WTC11 (cell line): ENCODE measurements at regions of chr9 and their contacts with region 1.

Region 1: DNA sequence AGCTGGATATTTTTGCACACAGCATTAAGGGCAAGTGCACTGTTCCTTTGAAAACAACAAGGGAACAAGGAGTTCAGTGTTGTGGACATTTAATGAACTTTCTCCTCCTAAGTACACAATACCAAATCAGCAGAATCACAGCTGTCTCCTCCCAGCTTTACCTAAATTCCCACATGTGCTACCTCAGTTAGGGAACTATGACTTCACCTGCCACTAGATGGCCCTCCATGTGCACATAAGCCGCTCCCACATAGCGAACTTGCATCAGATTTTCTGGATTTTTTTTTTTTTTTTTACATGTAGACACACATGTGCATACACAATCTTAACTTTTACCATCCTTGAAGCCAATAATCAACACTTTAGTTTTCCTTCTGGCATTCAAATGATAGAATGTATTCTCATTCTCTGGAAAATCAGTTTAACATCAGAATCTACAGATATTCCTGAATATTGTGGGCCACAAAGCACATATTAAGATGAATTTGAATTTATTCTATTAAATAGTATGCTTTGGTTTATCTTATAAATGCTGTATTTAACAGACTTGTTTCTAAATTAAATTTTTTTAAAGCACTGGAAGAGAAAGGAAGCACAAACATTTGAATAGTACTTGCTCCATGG is 123.6 kb downstream of the PALM2AKAP2 start:
- DNase-seq: peak; percentile 59
- ATAC-seq: peak; percentile 87
- H3K4me3 Mint-ChIP-seq: no peak overlapping the region
- H3K27ac Mint-ChIP-seq: no peak overlapping the region
- H3K4me1 Mint-ChIP-seq: peaks cover 12% of the 10 kb centered on the region
- H3K27me3 Mint-ChIP-seq: no peaks in the 10 kb centered on the region
- CTCF ChIP-seq: peak; percentile 62

Region 2: GRCh38 chr9:109590945-109591344 is 312.7 kb before region 1 on chr9:
- CTCF ChIA-PET with region 1: no interaction called
- POLR2A ChIA-PET with region 1: no interaction called
- DNase-seq: no peak
- ATAC-seq: no peak
- H3K4me3 Mint-ChIP-seq: no peak overlapping the region
- H3K27ac Mint-ChIP-seq: no peak overlapping the region
- H3K4me1 Mint-ChIP-seq: peaks cover 3% of the 10 kb centered on the region; the same call in 1 of the 2 replicates
- H3K27me3 Mint-ChIP-seq: 0 out of 2 replicates have a peak, but pooled peaks cover 2% of the 10 kb centered on the region
- CTCF ChIP-seq: no peak

Region 3: GRCh38 chr9:109969011-109969410 is 65.4 kb after region 1 on chr9:
- CTCF ChIA-PET with region 1: interaction called, 11 read pairs
- POLR2A ChIA-PET with region 1: no interaction called
- DNase-seq: peak; percentile 38
- ATAC-seq: peak; percentile 95
- H3K4me3 Mint-ChIP-seq: no peak overlapping the region
- H3K27ac Mint-ChIP-seq: no peak overlapping the region; the same call in none of the 2 replicates
- H3K4me1 Mint-ChIP-seq: peaks cover 7% of the 10 kb centered on the region
- H3K27me3 Mint-ChIP-seq: no peaks in the 10 kb centered on the region
- CTCF ChIP-seq: no peak

Region 4: DNA sequence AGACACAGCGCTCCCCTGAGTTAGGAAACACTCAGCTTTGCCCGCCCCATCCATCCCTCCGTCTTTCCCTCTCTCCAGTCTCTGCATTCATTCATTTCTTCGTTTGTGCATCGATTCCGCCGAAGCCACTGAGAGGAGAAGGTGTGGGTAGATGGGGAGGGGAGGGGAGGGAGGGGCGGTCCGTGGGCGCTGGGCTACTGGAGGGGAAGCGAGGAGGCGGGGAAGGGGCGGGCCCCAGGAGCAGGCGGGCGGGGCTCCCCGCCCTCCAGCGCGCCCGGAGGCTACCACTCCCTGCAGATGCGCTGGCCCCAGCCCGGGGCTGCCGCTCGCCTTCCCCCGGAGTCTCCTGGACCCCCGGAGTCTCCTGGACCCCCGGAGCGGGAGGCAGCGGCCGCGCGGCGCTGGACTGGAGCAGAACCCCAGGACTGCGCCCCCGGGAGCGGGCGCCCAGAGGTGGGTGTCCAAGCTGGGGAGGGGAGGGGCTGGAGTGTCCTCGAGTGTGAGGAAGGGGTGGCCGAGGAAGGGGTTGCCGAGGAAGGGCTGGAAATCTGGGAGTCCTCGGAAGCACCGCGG is 144.9 kb after region 1 on chr9:
- CTCF ChIA-PET with region 1: interaction called, 16 read pairs
- POLR2A ChIA-PET with region 1: no interaction called
- DNase-seq: peak; percentile 81
- ATAC-seq: peak; percentile 68
- H3K4me3 Mint-ChIP-seq: peak overlapping the region; percentile 87
- H3K27ac Mint-ChIP-seq: peak overlapping the region; percentile 98
- H3K4me1 Mint-ChIP-seq: peaks cover 55% of the 10 kb centered on the region
- H3K27me3 Mint-ChIP-seq: peaks cover 14% of the 10 kb centered on the region
- CTCF ChIP-seq: no peak

Region 5: GRCh38 chr9:110058304-110058953 is 154.8 kb after region 1 on chr9:
- CTCF ChIA-PET with region 1: interaction called, 25 read pairs
- POLR2A ChIA-PET with region 1: no interaction called
- DNase-seq: peak; percentile 68
- ATAC-seq: peak; percentile 96
- H3K4me3 Mint-ChIP-seq: no peak overlapping the region
- H3K27ac Mint-ChIP-seq: peak overlapping the region; percentile 81
- H3K4me1 Mint-ChIP-seq: peaks cover 40% of the 10 kb centered on the region
- H3K27me3 Mint-ChIP-seq: no peaks in the 10 kb centered on the region
- CTCF ChIP-seq: peak; percentile 35; the same call in 1 of the 2 replicates

Region 6: GRCh38 chr9:110142868-110143462 is 239.3 kb after region 1 on chr9:
- CTCF ChIA-PET with region 1: interaction called, 27 read pairs
- POLR2A ChIA-PET with region 1: no interaction called
- DNase-seq: peak; percentile 21
- ATAC-seq: peak; percentile 94
- H3K4me3 Mint-ChIP-seq: no peak overlapping the region
- H3K27ac Mint-ChIP-seq: no peak overlapping the region
- H3K4me1 Mint-ChIP-seq: peaks cover 22% of the 10 kb centered on the region
- H3K27me3 Mint-ChIP-seq: no peaks in the 10 kb centered on the region
- CTCF ChIP-seq: no peak